ENCODE measurements at regions of chr22 and their contacts with region 1.

Region 1: DNA sequence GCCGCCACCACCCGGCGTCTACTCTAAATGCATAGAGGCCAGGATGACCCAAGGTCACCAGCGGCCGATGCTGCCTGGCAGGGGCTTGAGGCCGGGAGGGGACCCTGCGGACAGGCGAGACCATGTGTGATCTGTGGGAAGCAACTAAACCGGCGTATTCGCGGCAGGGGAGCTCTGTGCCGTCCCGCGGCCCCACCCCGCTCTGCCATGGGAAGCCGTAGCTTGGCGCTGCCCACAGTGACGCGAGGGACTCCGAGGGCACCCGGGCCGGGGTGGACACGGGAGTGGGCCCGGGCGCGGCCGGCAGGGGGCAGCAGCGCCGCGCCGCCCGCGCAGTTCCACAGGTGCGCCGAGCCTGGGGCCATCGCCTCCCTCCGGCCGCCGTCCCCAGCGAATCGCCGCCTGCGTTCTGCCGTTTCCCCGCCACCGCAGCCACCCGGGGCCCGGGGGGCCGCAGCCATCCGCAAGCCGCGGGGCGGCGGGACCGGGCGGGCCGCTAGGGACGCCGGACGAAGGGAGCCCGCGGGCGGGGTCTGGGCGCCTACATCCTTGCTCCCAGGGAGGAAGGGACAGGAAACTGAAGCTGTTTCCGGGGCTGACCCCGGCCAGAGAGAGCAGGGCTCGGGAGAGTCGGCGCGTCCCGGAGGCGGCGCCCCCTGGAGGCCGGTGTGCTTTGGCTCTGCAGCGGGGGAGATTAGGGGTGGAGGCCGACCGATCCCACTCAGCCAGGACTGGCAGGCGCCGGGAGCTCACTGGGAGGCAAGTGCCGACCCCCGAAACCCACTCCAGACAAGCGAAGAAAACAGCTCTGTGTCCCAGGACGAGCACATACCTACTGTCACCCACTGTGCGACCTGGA is 12.5 kb upstream of the HDHD5 start:
- DNase-seq: peak; percentile 91
- ATAC-seq: peak; percentile 91
- H3K4me3 Mint-ChIP-seq: peak overlapping the region; percentile 78
- H3K27ac Mint-ChIP-seq: peak overlapping the region; percentile 72
- H3K4me1 Mint-ChIP-seq: peaks cover 7% of the 10 kb centered on the region
- H3K27me3 Mint-ChIP-seq: no peaks in the 10 kb centered on the region

Region 2: DNA sequence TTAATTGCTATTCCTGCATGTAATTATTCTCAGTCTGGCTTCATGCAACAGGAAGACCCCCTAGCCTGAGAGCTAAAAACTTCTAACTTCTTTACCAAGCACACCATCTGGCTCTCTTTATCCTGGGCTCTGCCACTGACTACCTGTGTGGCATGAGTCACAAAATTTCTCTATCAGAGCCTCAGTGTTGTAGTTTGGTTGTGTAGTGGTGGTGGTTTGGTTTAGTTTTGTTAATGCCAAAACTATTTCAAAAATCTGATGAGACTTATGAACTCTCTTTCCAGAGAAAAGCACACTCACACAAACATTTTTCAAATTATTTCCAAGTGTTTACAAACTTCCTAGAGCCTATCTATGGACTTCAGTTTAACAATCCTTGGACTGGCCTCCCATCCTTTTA is 94.3 kb before region 1 on chr22:
- CTCF ChIA-PET with region 1: interaction called, 48 read pairs
- POLR2A ChIA-PET with region 1: no interaction called
- intact Hi-C with region 1: loop called (anchors 1 kb)
- DNase-seq: no peak
- ATAC-seq: no peak
- H3K4me3 Mint-ChIP-seq: no peak overlapping the region
- H3K27ac Mint-ChIP-seq: no peak overlapping the region
- H3K4me1 Mint-ChIP-seq: peaks cover 24% of the 10 kb centered on the region
- H3K27me3 Mint-ChIP-seq: no peaks in the 10 kb centered on the region

Region 3: DNA sequence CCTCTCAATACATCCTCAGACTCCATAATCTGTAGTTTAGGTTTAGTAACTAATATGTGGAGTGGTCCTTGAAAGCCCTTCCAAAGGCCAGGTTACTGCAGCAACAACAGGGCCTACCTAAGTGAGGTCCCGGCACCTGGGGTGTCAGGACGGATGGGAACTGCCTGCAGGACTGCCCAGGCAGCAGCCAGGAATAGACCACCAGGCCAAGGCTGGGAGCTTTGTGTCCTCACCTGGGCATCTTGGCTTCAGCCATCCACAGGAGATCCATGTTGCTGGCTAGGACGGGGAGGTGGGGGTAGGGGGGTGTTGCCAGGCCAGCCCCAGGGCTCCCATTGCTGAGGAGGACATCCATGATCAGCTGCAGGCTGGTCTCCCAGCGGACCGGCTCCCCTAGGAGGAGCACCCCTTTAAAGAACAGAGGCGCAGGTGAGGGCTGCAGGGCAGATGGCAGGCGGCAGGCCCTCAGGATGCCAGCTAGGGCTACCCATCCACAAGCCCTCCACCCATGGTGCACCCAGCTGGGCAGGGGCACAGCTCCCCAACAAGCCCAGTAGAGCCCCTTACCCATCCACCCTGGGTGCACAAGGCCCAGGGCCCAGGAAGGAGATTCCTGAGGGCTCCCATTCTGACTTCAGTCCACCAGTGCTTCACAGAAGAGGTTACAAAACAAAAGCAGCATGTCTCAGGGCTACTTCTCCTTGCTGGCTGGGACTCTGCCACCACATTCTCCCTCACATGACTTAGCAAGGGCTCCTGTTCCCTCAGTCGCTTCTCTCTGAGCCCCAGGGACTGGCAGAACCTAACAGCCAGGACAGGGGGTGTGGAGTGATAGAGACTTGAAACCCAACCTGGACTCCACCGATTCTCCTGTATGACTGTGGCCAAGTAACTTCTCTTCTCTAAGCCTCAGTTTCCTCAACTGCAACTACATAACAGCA is 30.4 kb before region 1 on chr22:
- CTCF ChIA-PET with region 1: no interaction called
- POLR2A ChIA-PET with region 1: no interaction called
- intact Hi-C with region 1: no loop called
- DNase-seq: no peak
- ATAC-seq: no peak
- H3K4me3 Mint-ChIP-seq: no peak overlapping the region
- H3K27ac Mint-ChIP-seq: no peak overlapping the region
- H3K4me1 Mint-ChIP-seq: no peaks in the 10 kb centered on the region
- H3K27me3 Mint-ChIP-seq: no peaks in the 10 kb centered on the region

Region 4: DNA sequence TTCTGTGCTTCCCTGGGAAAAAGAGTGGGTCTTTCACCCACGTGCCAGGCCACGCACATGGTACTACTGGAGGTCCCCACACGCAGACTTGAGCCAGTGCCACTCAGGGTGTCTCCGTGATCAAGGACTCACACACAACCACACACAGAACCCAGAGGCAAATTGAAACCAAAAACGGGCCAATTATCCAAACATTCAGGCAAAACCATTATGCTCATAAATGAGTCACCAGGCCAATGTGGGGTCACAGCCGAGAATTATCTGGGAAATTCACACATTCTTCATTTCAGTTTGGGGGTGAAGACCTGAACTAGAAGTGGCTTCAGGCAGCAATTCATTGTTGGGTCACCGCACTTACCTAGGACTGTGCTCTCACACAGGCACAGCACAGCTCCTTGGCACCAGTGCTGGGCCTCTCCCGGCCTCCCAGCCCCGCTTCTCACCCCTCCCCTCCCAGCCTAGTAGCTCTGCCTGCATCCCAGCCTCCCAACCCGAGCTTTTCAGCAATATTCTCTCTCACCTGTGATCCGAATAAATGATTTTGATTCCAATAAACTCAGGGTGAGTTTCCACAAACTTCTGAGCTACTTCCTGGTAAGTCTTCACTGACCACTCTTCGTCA is 19.7 kb after region 1 on chr22:
- CTCF ChIA-PET with region 1: interaction called, 11 read pairs
- POLR2A ChIA-PET with region 1: no interaction called
- intact Hi-C with region 1: no loop called
- DNase-seq: no peak
- ATAC-seq: no peak
- H3K4me3 Mint-ChIP-seq: no peak overlapping the region
- H3K27ac Mint-ChIP-seq: peak overlapping the region; percentile 25
- H3K4me1 Mint-ChIP-seq: peaks cover 3% of the 10 kb centered on the region
- H3K27me3 Mint-ChIP-seq: no peaks in the 10 kb centered on the region

Region 5: GRCh38 chr22:17368554-17369438 is 197.3 kb after region 1 on chr22:
- CTCF ChIA-PET with region 1: interaction called, 6 read pairs
- POLR2A ChIA-PET with region 1: no interaction called
- intact Hi-C with region 1: loop called in 1 of 2 experiments (anchors 1 kb)
- DNase-seq: no peak
- ATAC-seq: peak; percentile 16
- H3K4me3 Mint-ChIP-seq: peak overlapping the region; percentile 22
- H3K27ac Mint-ChIP-seq: no peak overlapping the region
- H3K4me1 Mint-ChIP-seq: peaks cover 23% of the 10 kb centered on the region
- H3K27me3 Mint-ChIP-seq: peaks cover 52% of the 10 kb centered on the region

Region 6: DNA sequence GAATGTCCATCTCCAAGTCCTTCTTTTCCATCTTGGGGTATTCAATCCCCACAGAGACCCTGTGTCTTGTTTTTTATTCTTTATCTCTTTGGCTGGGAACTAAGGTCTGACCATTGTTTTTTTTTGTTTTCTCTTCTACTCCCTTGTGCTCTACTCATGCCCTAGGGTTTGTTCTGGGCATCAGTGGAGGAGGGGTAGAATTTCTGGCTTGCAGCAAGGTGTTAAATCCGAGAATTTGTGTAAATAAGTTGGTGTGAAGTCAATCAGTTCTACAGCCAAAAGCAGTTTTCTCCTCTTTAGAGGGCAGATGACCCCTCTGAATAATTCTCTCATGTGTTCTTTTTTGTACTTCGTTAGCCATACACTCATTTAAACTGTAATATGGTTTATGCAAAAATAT is 208.4 kb after region 1 on chr22:
- CTCF ChIA-PET with region 1: no interaction called
- POLR2A ChIA-PET with region 1: no interaction called
- intact Hi-C with region 1: no loop called
- DNase-seq: no peak
- ATAC-seq: no peak
- H3K4me3 Mint-ChIP-seq: no peak overlapping the region
- H3K27ac Mint-ChIP-seq: no peak overlapping the region
- H3K4me1 Mint-ChIP-seq: no peaks in the 10 kb centered on the region
- H3K27me3 Mint-ChIP-seq: peaks cover 4% of the 10 kb centered on the region

Region 7: GRCh38 chr22:17638432-17639246 is 467.1 kb after region 1 on chr22 and contains the start of gene BCL2L13:
- CTCF ChIA-PET with region 1: no interaction called
- POLR2A ChIA-PET with region 1: no interaction called
- intact Hi-C with region 1: loop called in 1 of 2 experiments (anchors 5 kb)
- DNase-seq: peak; percentile 94
- ATAC-seq: peak; percentile 96
- H3K4me3 Mint-ChIP-seq: peak within 1 kb of the TSS; percentile 88
- H3K27ac Mint-ChIP-seq: peak within 1 kb of the TSS; percentile 95
- H3K4me1 Mint-ChIP-seq: peaks cover 24% of the 10 kb centered on the region
- H3K27me3 Mint-ChIP-seq: no peaks in the 10 kb centered on the region
- total RNA-seq, gene BCL2L13: 34.1 to 34.5 TPM

Measured in activated CD4-positive, alpha-beta T cell treated with anti-CD3 and anti-CD28 coated beads for 36 hours (primary cell).